ENCODE measurements at regions of chr12 and their contacts with region 1.

Region 1: DNA sequence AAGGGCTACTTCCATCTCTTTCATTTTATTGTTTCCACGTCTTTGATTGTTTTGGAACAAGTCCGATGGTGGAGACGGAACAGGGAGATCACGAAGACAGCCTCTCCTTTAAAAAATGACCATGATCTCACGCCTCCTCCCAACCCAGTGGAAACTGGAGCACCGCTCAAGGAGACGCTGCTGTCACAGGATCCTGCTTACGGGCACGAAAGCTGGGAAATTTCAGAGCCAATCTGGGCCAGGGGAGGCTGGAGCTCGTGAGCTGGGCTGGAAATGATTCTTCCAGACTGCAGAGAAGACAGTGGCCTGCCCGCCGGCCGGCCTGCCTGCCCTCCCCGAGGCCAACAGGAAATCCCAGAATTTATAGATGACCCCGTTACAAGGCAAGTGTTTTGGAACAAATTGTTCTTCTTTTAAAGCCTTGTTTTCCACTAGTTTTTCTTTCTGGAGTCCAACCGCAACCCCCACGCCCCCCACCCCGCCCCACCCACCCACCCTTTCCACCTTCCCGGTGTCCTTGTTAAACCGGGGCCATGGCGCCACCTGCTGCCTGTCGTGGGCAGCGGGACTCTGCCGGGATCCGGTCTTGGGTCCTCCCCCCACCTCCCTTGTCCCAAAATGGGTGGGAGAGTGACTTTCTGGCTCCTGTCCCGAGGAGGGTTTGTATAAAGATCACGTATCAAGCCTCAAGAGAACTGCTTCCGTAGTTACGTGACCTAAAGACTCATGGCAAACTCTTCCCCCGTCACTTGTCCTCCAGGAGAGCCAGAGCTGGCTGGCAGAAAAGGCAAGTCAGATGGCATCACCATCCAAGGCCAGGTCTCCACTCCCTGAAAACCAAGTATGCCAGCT is 40.3 kb downstream of the MAP1LC3B2 start:
- DNase-seq: peak; percentile 62
- ATAC-seq: peak; percentile 86
- H3K4me3 Mint-ChIP-seq: peak overlapping the region; percentile 45
- H3K27ac Mint-ChIP-seq: peak overlapping the region; percentile 18
- H3K4me1 Mint-ChIP-seq: peaks cover 28% of the 10 kb centered on the region
- H3K27me3 Mint-ChIP-seq: no peaks in the 10 kb centered on the region
- CTCF ChIP-seq: peak; percentile 35

Region 2: DNA sequence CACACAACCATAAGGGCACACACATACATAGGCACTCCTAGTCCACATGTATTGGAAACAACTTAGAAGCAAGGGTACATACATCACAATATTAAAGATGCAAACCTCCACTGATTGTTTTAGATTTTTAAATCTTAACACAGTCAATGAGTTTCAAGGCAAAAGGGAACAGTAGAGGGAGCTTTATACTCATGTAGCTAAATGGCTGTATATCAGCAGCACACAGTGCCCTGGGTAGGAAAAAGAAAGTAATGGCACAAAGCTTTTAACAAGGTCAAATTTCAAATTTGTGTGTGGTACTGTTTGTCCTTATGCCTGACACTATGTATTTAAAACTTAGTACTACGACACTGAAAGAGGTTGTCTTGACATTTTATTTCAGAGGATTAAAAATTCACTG is 584.0 kb before region 1 on chr12:
- CTCF ChIA-PET with region 1: interaction called, 7 read pairs
- POLR2A ChIA-PET with region 1: no interaction called
- intact Hi-C with region 1: loop called (anchors 2 kb)
- DNase-seq: no peak
- ATAC-seq: peak; percentile 67
- H3K4me3 Mint-ChIP-seq: no peak overlapping the region
- H3K27ac Mint-ChIP-seq: no peak overlapping the region
- H3K4me1 Mint-ChIP-seq: no peaks in the 10 kb centered on the region
- H3K27me3 Mint-ChIP-seq: no peaks in the 10 kb centered on the region
- CTCF ChIP-seq: no peak

Region 3: DNA sequence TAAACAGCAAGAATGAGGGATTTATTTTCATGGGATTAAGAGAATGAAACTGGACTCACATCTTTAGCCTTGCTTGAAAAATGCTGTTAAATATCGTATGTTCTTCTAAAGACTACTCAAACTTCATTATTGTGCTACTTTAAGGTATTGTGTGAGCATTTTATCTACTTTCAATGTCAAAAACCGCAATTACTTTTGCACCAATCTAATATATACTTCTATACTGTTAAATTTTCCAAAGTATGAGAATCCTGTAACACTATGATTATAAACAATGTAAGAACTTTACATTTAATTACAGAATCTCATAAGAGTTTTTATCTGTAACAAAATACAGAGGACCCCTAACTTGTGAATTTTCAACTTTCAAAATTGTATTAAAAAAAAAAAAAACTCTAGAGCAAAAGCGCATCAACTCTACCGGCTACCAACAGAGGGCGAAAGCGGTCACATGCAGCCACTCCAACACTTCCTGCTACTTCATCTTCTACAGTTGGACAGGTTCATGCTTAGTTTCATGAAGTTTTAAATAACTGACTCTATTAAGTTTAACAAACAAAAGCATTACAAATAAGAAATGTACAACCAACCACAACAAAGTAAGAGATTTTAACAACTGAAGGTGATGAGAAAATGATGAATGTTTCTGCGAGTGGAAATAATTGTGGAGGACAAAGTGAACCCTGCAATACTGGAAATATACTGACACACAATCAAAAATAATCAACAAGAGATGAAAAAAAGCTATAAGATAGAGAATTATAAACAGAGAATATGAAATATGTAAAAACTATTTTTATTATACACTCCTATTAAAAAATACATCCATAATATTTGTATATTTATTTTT is 532.9 kb before region 1 on chr12:
- CTCF ChIA-PET with region 1: interaction called, 8 read pairs
- POLR2A ChIA-PET with region 1: no interaction called
- intact Hi-C with region 1: loop called (anchors 2 kb)
- DNase-seq: peak; percentile 34
- ATAC-seq: peak; percentile 71
- H3K4me3 Mint-ChIP-seq: no peak overlapping the region
- H3K27ac Mint-ChIP-seq: peak overlapping the region; percentile 60
- H3K4me1 Mint-ChIP-seq: peaks cover 44% of the 10 kb centered on the region
- H3K27me3 Mint-ChIP-seq: no peaks in the 10 kb centered on the region
- CTCF ChIP-seq: peak; percentile 96

Region 4: DNA sequence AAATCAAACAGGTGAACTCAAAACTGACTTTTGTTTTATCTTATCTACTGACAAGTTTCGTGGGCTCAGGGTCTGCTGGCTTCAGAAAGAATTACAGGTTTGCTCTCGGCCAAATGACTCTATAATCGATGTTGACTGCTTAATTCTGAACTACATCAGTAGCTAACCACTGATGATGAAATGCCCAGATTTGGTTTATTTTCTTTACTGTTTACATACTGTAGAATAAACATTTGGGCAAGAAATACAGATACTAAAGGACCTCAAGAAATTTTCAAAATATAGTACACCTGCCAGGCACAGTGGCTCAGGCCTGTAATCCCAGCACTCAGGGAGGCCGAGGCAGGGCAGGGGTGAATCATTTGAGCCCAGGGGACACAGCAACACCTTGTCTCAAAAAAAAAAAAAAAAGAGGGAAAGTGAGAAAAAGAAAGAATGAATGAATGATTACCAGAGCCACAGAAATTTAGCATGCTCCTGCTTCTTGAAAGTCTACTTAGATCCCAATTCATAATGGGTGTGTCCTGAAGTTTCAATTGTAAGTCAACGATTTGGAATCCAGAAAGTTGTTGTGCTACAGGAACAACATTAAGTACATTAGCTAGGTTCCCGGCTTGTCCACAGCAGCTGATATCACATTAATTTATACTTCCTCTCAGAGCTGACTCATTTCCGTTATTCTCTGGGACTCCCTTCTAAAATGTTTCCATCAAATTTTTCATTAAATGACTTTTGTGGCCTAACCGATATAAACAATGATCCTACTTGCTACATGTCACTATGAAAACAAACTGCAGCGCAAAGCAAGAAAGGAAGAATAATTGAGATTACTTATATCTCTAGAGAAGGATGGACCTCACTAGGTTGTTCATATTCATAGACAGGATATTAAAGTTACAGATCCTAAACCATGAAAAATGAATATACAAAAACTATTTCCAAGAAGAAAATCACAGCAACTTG is 456.3 kb before region 1 on chr12:
- CTCF ChIA-PET with region 1: interaction called, 15 read pairs
- POLR2A ChIA-PET with region 1: no interaction called
- intact Hi-C with region 1: loop called (anchors 1 kb)
- DNase-seq: no peak
- ATAC-seq: peak; percentile 72
- H3K4me3 Mint-ChIP-seq: peak overlapping the region; percentile 50
- H3K27ac Mint-ChIP-seq: peak overlapping the region; percentile 21
- H3K4me1 Mint-ChIP-seq: peaks cover 55% of the 10 kb centered on the region
- H3K27me3 Mint-ChIP-seq: no peaks in the 10 kb centered on the region
- CTCF ChIP-seq: no peak

Region 5: DNA sequence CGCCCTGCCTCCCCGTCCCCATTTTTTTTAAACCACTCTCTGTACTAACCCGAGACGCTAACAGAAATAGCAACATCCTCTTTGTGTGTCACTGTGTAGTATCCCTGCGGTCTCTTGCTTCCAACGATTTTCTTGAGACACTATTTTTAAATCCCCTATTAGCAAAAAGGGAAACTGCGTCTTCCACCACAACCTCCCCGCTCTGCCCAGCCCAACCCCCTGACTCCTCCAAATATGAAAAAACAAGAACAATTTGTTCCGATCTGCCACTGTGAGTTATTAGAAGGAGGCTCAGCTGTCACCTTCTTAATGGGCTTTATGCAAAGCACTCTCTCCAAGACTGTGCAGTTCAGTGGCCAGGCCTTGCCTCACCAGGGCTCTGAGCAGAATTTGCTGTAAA is 36.0 kb after region 1 on chr12:
- CTCF ChIA-PET with region 1: no interaction called
- POLR2A ChIA-PET with region 1: no interaction called
- intact Hi-C with region 1: no loop called
- DNase-seq: no peak
- ATAC-seq: peak; percentile 71
- H3K4me3 Mint-ChIP-seq: peak overlapping the region; percentile 76
- H3K27ac Mint-ChIP-seq: no peak overlapping the region
- H3K4me1 Mint-ChIP-seq: peaks cover 23% of the 10 kb centered on the region
- H3K27me3 Mint-ChIP-seq: peaks cover 21% of the 10 kb centered on the region
- CTCF ChIP-seq: no peak

Measured in activated B cell treated with CpG ODN at 0.5 μM for 24 hours (primary cell).